Upper lobe of right lung (tissue), 1 donor: ENCODE measurements at regions of chr18 and their contacts with region 1.

Region 1: DNA sequence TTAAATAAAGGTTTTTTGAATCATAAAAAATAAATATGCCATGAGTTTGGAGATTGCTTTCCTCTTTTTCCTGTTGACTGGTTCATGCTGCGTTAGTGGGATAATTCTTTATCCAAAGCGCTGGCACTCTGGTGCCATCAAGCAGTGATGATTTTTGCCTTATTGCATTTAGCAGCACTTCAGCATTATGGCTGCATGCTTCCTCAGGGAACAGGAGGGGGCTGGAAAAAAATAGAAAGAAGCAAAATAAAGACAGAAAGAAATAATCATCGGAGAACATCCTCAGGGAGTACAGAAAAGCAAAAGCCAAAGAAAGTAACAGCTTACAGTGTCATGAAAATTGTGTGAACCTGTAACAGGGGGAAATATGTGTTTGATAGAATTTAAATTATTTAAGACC is 1408.2 kb upstream of the PIK3C3 start:
- DNase-seq: no peak
- ATAC-seq: no peak
- H3K4me3 ChIP-seq: no peak overlapping the region
- H3K27ac ChIP-seq: no peak overlapping the region
- H3K4me1 ChIP-seq: no peaks in the 10 kb centered on the region
- H3K27me3 ChIP-seq: no peaks in the 10 kb centered on the region
- CTCF ChIP-seq: no peak

Region 2: GRCh38 chr18:39681061-39681460 is 865.8 kb before region 1 on chr18:
- intact Hi-C with region 1: loop called (anchors 10 kb)
- DNase-seq: no peak
- ATAC-seq: no peak
- H3K4me3 ChIP-seq: no peak overlapping the region
- H3K27ac ChIP-seq: no peak overlapping the region
- H3K4me1 ChIP-seq: no peaks in the 10 kb centered on the region
- H3K27me3 ChIP-seq: no peaks in the 10 kb centered on the region
- CTCF ChIP-seq: no peak